G401 (cell line): ENCODE measurements at regions of chr11 and their contacts with region 1.

Region 1: GRCh38 chr11:68854273-68854958 is 12.7 kb upstream of the CPT1A start:
- DNase-seq: no peak

Region 2: DNA sequence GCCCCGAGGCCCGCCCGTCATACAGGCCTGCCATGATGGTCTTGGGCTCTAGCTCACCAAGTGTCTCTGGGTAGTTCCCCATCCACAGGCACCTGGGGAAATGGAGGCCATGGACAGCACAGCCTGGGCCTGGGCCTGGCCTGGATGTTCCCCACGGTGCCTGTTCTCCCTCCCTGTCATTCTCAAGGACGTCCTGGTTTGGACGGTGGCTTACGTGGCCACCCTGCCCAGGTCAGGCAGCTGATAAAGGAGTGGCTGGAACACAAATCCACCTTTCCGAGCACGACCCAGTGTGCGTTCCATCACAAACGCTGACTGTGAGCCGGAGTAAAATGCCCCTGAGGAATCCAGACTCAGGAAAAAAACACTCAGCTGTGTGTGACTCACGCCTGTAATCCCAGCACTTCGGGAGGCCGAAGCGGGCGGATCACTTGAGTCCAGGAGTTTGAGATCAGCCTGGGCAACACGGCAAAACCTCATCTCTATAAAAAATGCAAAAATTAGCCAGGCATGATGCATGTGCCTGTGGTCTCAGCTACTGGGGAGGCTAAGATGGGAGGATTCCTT is 61.9 kb before region 1 on chr11:
- in situ Hi-C with region 1: loop called (anchors 5 kb)
- DNase-seq: no peak

Region 3: DNA sequence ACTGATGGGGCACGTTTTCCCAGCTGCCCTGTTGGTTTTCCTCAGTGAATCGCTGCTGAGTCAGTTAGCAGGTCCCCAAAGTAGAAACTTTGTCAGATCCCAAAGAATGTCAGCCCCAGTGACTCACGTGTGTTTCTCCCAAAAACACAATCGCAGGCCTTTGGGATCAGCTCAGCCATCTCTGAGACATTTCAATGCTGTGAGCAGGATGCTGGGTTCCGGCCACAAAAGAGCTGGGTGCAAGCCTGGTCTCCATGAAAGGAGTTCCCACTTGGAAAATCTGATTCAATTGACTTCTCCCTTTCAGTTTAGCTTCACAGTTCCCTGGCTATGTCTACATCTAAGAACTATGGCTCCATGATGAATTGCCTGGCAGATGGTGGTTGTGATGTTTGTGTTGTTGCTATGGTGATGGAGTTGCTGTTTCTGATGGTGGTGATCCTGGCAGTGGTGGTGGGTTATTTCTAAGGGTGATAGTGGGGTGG is 467.5 kb after region 1 on chr11:
- in situ Hi-C with region 1: no loop called
- DNase-seq: no peak